ENCODE measurements at regions of chr2 and their contacts with region 1.

Region 1: GRCh38 chr2:234288974-234289455 is 207.9 kb downstream of the ARL4C start:
- DNase-seq: peak; percentile 67
- H3K4me3 Mint-ChIP-seq: no peak overlapping the region
- H3K27ac Mint-ChIP-seq: peak overlapping the region; percentile 99
- H3K4me1 Mint-ChIP-seq: peaks cover 79% of the 10 kb centered on the region
- H3K27me3 Mint-ChIP-seq: no peaks in the 10 kb centered on the region

Region 2: DNA sequence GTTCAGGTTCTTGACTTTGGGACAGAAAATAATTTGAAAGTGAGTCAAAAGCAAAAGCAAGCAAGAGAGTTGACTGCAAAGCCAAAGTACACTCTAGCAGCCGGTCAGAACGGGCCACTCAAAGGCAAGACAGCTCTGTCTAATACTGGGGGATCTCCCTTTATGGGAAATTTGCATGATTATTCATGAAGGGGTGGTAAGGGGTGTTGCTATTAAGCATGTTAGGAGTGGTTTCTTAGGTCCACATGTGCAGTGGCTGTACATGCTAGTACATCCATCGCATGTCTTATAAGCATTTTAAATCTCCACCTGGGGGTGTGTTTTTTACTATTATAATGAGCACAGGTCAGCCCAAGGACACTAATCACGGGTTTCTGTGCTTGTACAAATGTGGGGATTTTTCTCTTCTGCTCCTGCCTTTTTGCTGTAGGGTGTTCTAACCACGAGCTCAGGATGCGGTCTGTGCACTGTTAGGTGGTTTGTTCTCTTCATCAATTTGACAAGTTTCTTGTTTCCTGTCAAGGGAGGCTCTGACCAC is 298.7 kb before region 1 on chr2:
- intact Hi-C with region 1: loop called (anchors 1 kb)
- DNase-seq: peak; percentile 58
- H3K4me3 Mint-ChIP-seq: no peak overlapping the region
- H3K27ac Mint-ChIP-seq: no peak overlapping the region
- H3K4me1 Mint-ChIP-seq: peaks cover 34% of the 10 kb centered on the region
- H3K27me3 Mint-ChIP-seq: peaks cover 19% of the 10 kb centered on the region

Region 3: GRCh38 chr2:234269769-234270204 is 19.2 kb before region 1 on chr2:
- intact Hi-C with region 1: loop called (anchors 1 kb)
- DNase-seq: no peak
- H3K4me3 Mint-ChIP-seq: no peak overlapping the region
- H3K27ac Mint-ChIP-seq: no peak overlapping the region
- H3K4me1 Mint-ChIP-seq: peaks cover 75% of the 10 kb centered on the region
- H3K27me3 Mint-ChIP-seq: no peaks in the 10 kb centered on the region

Region 4: GRCh38 chr2:234308813-234309195 is 19.8 kb after region 1 on chr2:
- intact Hi-C with region 1: loop called (anchors 1 kb)
- DNase-seq: peak; percentile 78
- H3K4me3 Mint-ChIP-seq: peak overlapping the region; percentile 51
- H3K27ac Mint-ChIP-seq: peak overlapping the region; percentile 96
- H3K4me1 Mint-ChIP-seq: peaks cover 60% of the 10 kb centered on the region
- H3K27me3 Mint-ChIP-seq: no peaks in the 10 kb centered on the region

Region 5: GRCh38 chr2:234399451-234400246 is 110.6 kb after region 1 on chr2:
- intact Hi-C with region 1: loop called (anchors 1 kb)
- DNase-seq: no peak
- H3K4me3 Mint-ChIP-seq: no peak overlapping the region
- H3K27ac Mint-ChIP-seq: peak overlapping the region; percentile 68
- H3K4me1 Mint-ChIP-seq: peaks cover 55% of the 10 kb centered on the region
- H3K27me3 Mint-ChIP-seq: no peaks in the 10 kb centered on the region

Region 6: DNA sequence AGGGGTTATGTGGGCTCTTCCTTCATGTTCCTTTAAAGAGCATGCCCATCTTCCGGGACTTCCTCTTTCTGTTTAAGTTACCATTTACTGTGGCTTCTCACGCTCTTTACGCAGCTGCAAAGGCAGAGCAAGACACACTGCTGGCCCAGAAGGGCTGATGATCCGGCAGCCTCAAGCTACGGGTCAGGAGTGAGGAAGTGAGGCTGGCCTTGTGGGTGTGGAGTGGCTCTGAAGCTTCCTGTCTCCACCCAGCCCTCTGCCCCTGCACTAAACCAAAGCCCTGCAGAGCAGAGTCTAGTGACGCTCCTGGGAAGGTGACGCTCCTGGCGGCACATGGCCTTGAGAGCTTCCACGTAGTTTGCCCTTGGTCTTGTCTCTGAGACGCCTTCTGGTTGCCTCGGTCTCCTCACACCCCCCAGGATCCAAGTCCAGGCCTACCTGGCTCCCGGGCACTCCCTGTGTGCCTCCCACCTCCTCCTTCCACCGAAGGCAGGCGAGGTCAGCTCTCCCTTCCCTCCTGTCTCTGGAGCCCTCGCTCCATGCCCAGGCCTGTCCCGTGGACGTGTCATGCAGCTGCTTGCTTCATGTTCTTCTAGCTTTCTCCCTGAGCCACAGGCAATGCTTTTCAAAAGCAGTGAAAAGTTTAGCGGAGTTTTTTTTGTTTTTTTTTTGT is 157.5 kb after region 1 on chr2:
- intact Hi-C with region 1: loop called (anchors 2 kb)
- DNase-seq: peak; percentile 85
- H3K4me3 Mint-ChIP-seq: peak overlapping the region; percentile 53
- H3K27ac Mint-ChIP-seq: peak overlapping the region; percentile 96
- H3K4me1 Mint-ChIP-seq: peaks cover 77% of the 10 kb centered on the region
- H3K27me3 Mint-ChIP-seq: no peaks in the 10 kb centered on the region

Region 7: DNA sequence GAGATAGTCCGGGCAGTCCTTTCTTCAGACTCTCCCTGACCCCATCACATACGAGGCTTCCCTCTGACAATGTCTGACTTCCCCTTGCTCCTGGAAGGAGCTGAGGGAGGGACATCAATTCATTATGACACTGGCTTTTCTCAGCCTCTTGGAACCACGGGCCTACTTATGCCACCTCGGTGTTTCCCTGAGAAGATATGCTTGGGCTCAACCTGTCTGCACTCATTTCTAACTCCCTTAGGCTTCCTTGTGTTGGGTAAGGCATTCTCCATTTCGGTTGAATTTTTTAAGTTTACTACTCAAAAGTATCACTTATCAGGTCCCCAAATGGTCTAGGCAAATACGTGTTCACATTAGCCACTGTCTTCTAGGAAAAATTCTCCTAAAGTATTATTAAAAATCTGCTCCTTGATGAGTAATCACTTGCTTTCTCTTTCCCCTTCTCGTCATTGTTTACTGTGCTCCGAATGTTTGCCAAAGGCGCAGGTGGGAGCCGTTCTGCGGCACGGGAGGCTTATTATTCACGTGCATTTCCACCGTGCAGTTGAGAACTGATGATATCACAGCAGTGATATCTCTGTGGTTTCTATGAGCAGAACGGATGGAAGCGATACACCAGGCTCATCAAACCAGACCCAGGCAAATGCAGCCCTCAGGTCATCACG is 174.7 kb after region 1 on chr2:
- intact Hi-C with region 1: loop called (anchors 1 kb)
- DNase-seq: peak; percentile 76
- H3K4me3 Mint-ChIP-seq: peak overlapping the region; percentile 81
- H3K27ac Mint-ChIP-seq: peak overlapping the region; percentile 91
- H3K4me1 Mint-ChIP-seq: peaks cover 57% of the 10 kb centered on the region
- H3K27me3 Mint-ChIP-seq: no peaks in the 10 kb centered on the region

Measured in activated T-helper 2 cell treated with anti-CD3 and anti-CD28 coated beads, Interferon-gamma antibody, Interleukin-2, Interleukin-4, amounts not matched to agents 10 μg/mL and 5 μg/mL and 100 μg/mL, durations not matched to agents 14 hours and 24 hours and 36 hours (primary cell).